ENCODE measurements at regions of chr16 and their contacts with region 1.

Region 1: DNA sequence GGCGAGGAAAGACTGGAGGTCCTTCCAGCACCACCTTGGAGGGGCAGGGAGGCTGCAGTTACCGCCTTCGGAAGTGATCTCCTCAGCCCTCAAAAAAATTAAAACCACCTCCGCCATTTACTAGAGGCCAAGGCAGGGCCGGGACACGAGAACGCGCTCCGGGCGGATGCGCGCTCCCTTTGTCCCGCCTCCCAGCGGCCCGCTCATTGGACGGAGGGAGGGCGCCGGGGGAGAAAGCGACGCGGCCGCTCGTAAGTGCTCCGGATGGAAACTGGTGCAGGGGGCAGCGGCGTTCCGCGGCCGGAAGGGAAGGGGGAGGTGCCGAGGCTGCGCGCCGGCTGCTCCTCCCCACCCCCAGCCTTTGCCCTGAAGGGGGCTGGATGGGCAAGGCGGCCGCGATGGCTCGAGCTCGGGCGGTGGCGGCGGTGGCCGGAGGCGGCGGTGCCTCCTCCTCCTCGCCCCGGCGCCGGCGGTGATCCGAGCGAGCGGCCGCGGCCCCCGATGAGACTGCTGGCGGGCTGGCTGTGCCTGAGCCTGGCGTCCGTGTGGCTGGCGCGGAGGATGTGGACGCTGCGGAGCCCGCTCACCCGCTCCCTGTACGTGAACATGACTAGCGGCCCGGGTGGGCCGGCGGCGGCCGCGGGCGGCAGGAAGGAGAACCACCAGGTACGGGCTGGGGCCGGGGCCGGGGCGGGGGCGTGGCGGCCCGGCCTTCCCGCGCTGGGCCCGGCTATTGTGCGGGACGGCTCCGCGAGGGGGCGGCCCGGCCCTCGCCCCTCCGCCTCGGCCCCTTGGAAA is at the start of gene METTL9:
- DNase-seq: peak; percentile 94 to 97 (median 96)
- ATAC-seq: peak; percentile 99 to 100 (median 99)
- H3K4me3 ChIP-seq: peak within 1 kb of the TSS; percentile 71 to 96 (median 90)
- H3K27ac ChIP-seq: peak within 1 kb of the TSS; percentile 84 to 98 (median 94)
- H3K4me1 ChIP-seq: peaks cover 3 to 49% (median 25%) of the 10 kb centered on the region in 12 donors
- H3K27me3 ChIP-seq: no peaks in the 10 kb centered on the region
- CTCF ChIP-seq: peak in 2 of 12 donors; percentile 8 to 12
- POLR2A ChIP-seq: peak in 1 of 2 donors; percentile 83
- total RNA-seq, gene METTL9: 53.2 to 70.6 (median 59.3) TPM

Region 2: DNA sequence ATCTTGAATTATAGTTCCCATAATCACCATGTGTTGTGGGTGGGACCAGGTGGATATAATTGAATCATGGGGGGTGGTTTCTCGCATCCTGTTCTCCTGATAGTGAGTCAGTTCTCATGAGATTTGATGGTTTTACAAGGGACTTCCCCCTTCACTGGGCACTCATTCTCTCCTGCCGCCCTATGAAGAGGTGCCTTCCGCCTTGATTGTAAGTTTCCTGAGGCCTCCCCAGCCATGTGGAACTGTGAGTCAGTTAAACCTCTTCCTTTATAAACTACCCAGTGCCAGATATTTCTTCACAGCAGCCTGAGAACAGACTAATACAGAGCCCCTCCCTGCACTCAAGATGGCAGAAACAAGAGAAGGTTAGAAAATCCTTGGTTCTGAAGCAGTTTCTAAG is 414.6 kb before region 1 on chr16:
- intact Hi-C with region 1: no loop called
- DNase-seq: no peak
- ATAC-seq: no peak
- H3K4me3 ChIP-seq: no peak overlapping the region
- H3K27ac ChIP-seq: no peak overlapping the region
- H3K4me1 ChIP-seq: peaks cover 0 to 7% (median 2%) of the 10 kb centered on the region in 12 donors
- H3K27me3 ChIP-seq: no peaks in the 10 kb centered on the region
- CTCF ChIP-seq: no peak
- POLR2A ChIP-seq: no peak

Region 3: DNA sequence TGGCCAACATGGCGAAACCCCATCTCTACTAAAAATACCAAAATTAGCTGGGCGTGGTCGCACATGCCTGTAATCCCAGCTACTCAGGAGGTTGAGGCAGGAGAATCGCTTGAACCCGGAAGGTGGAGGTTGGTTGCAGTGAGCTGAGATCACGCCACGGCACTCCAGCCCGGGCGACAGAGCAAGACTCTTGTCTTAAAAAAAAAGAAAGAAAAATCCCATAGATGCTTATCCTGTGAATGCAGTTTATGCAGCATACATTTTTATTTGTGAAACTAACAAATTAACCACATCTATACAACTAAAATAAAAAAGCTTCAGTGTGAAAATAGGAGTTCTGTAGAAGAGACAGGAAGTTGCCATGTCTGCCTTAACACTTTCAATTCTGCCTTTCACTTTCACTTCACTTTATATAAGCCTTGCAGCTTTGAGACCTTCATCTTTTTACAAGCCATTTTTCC is 45.9 kb after region 1 on chr16:
- intact Hi-C with region 1: loop called in 3 of 10 experiments (anchors 5 kb)
- DNase-seq: no peak
- ATAC-seq: peak in 3 of 4 donors; percentile 54 to 61 (median 59)
- H3K4me3 ChIP-seq: peak overlapping the region in 11 of 12 donors; percentile 9 to 51 (median 35)
- H3K27ac ChIP-seq: peak overlapping the region; percentile 20 to 94 (median 68)
- H3K4me1 ChIP-seq: peaks cover 0 to 88% (median 19%) of the 10 kb centered on the region in 12 donors
- H3K27me3 ChIP-seq: no peaks in the 10 kb centered on the region
- CTCF ChIP-seq: no peak
- POLR2A ChIP-seq: no peak

Region 4: GRCh38 chr16:21673469-21673868 is 74.0 kb after region 1 on chr16:
- intact Hi-C with region 1: no loop called
- DNase-seq: no peak
- ATAC-seq: no peak
- H3K4me3 ChIP-seq: no peak overlapping the region
- H3K27ac ChIP-seq: no peak overlapping the region
- H3K4me1 ChIP-seq: no peaks in the 10 kb centered on the region
- H3K27me3 ChIP-seq: peaks cover 0 to 3% (median 0%) of the 10 kb centered on the region in 9 donors
- CTCF ChIP-seq: no peak
- POLR2A ChIP-seq: no peak